Esophagus muscularis mucosa (tissue), 4 donors: ENCODE measurements at regions of chr6 and their contacts with region 1.

Region 1: GRCh38 chr6:157184202-157185020 is 138.9 kb downstream of the TMEM242 start:
- DNase-seq: no peak
- H3K4me3 ChIP-seq: peak overlapping the region; percentile 10 to 32 (median 23)
- H3K27ac ChIP-seq: peak overlapping the region in 3 of 4 donors; percentile 7 to 54 (median 28)
- H3K4me1 ChIP-seq: peaks cover 6 to 35% (median 33%) of the 10 kb centered on the region in 4 donors
- H3K27me3 ChIP-seq: no peaks in the 10 kb centered on the region
- CTCF ChIP-seq: peak; percentile 93 to 99 (median 93)
- EP300 ChIP-seq: no peak
- POLR2A ChIP-seq: no peak

Region 2: GRCh38 chr6:157034436-157035230 is 149.8 kb before region 1 on chr6:
- intact Hi-C with region 1: loop called (anchors 5 kb)
- DNase-seq: no peak
- H3K4me3 ChIP-seq: no peak overlapping the region
- H3K27ac ChIP-seq: peak overlapping the region in 2 of 4 donors; percentile 49 to 58
- H3K4me1 ChIP-seq: peaks cover 29 to 50% (median 49%) of the 10 kb centered on the region in 4 donors
- H3K27me3 ChIP-seq: no peaks in the 10 kb centered on the region
- CTCF ChIP-seq: peak; percentile 62 to 71 (median 65)
- EP300 ChIP-seq: no peak
- POLR2A ChIP-seq: no peak